ENCODE measurements at regions of chr11 and their contacts with region 1.

Region 1: GRCh38 chr11:34357701-34358257 is at the start of gene ABTB2:
- DNase-seq: peak; percentile 97 to 98
- ATAC-seq: peak; percentile 92 to 98 (median 94)
- H3K4me3 ChIP-seq: peak within 1 kb of the TSS; percentile 47
- H3K4me3 Mint-ChIP-seq: peak within 1 kb of the TSS; percentile 96
- H3K27ac ChIP-seq: no peak within 1 kb of the TSS
- H3K27ac Mint-ChIP-seq: peak within 1 kb of the TSS; percentile 61 to 66
- H3K4me1 ChIP-seq: peaks cover 28% of the 10 kb centered on the region
- H3K4me1 Mint-ChIP-seq: peaks cover 28 to 43% of the 10 kb centered on the region in 2 donors
- H3K27me3 ChIP-seq: peaks cover 22% of the 10 kb centered on the region
- H3K27me3 Mint-ChIP-seq: peaks cover 32 to 62% of the 10 kb centered on the region in 2 donors
- CTCF ChIP-seq: no peak
- total RNA-seq, gene ABTB2: 0.65 to 1.7 (median 1.1) TPM

Region 2: DNA sequence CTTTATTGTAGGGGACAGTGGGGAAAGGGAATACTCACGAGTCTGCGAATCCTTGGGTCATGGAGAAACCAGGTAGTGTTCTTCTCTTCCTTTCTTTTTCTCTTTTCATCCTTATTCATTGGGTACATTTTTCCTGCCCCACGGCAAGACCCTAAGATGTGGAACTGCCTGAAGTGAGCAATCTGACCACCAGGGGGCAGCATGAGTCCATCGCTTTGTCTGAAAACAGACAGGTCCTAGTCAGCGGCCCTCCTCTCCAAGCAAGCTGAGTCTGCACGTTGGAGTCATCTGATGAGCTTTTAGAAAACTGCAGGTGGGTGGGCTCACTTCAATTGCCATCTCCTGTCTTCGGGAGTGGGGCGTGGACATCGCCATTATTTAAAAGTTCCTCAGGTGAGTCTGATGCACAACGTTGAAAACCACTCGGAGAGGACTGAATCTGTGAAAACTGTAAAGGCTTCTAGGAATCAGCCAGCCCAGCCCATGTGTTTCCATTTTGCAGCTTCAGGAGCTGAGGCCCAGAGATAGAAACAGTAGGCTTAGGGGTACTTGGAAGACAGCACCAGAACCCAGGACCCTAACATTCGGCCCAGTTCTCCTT is 549.5 kb before region 1 on chr11:
- intact Hi-C with region 1: loop called (anchors 1 kb)
- DNase-seq: peak; percentile 79 to 89
- ATAC-seq: peak; percentile 88 to 97 (median 91)
- H3K4me3 ChIP-seq: no peak overlapping the region
- H3K4me3 Mint-ChIP-seq: no peak overlapping the region
- H3K27ac ChIP-seq: no peak overlapping the region
- H3K27ac Mint-ChIP-seq: no peak overlapping the region
- H3K4me1 ChIP-seq: no peaks in the 10 kb centered on the region
- H3K4me1 Mint-ChIP-seq: peaks cover 5% of the 10 kb centered on the region in 2 donors
- H3K27me3 ChIP-seq: peaks cover 16% of the 10 kb centered on the region
- H3K27me3 Mint-ChIP-seq: peaks cover 22 to 39% of the 10 kb centered on the region in 2 donors
- CTCF ChIP-seq: peak; percentile 89

Region 3: GRCh38 chr11:33996498-33997454 is 361.0 kb before region 1 on chr11:
- intact Hi-C with region 1: loop called (anchors 1 kb)
- DNase-seq: peak; percentile 48 to 86
- ATAC-seq: peak; percentile 93 to 100 (median 100)
- H3K4me3 ChIP-seq: no peak overlapping the region
- H3K4me3 Mint-ChIP-seq: no peak overlapping the region
- H3K27ac ChIP-seq: no peak overlapping the region
- H3K27ac Mint-ChIP-seq: no peak overlapping the region
- H3K4me1 ChIP-seq: peaks cover 5% of the 10 kb centered on the region
- H3K4me1 Mint-ChIP-seq: peaks cover 7 to 10% of the 10 kb centered on the region in 2 donors
- H3K27me3 ChIP-seq: peaks cover 11% of the 10 kb centered on the region
- H3K27me3 Mint-ChIP-seq: peaks cover 19 to 22% of the 10 kb centered on the region in 2 donors
- CTCF ChIP-seq: peak; percentile 74

Region 4: GRCh38 chr11:34105079-34105956 is 252.5 kb before region 1 on chr11 and contains the start of gene NAT10:
- intact Hi-C with region 1: loop called (anchors 1 kb)
- DNase-seq: peak; percentile 96 to 100
- ATAC-seq: peak; percentile 93 to 98 (median 94)
- H3K4me3 ChIP-seq: peak within 1 kb of the TSS; percentile 82
- H3K4me3 Mint-ChIP-seq: peak within 1 kb of the TSS; percentile 96
- H3K27ac ChIP-seq: peak within 1 kb of the TSS; percentile 94
- H3K27ac Mint-ChIP-seq: peak within 1 kb of the TSS; percentile 96 to 97
- H3K4me1 ChIP-seq: peaks cover 16% of the 10 kb centered on the region
- H3K4me1 Mint-ChIP-seq: peaks cover 34 to 40% of the 10 kb centered on the region in 2 donors
- H3K27me3 ChIP-seq: no peaks in the 10 kb centered on the region
- H3K27me3 Mint-ChIP-seq: no peaks in the 10 kb centered on the region
- CTCF ChIP-seq: no peak
- total RNA-seq, gene NAT10: 40.3 to 53.6 (median 42.8) TPM

Region 5: DNA sequence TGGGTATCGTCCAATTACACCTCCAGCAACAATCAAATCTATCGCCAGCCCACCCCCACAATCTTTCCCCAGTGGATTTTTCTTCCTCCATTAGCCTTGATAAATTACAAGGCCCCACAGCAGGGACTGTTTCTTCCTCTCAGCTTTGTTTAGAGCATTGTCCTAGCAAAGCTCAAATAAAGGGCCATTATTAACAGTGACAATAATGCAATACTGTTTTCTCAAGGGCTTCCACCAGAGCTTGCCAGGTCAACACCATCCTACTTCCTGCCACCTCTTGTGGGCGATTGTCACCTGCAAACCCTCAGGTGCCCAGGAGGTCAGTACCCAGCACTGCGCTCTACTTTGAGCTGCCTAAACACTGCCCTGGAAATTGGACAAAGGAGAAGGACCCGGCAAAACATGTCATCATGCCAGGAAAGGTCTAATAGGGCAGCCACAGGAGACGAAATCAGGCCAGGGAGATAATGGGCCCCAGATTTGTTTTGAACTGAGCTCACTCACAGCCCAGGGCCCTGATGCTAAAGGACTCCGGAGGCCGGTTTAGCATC is 95.2 kb before region 1 on chr11:
- intact Hi-C with region 1: no loop called
- DNase-seq: no peak
- ATAC-seq: no peak
- H3K4me3 ChIP-seq: no peak overlapping the region
- H3K4me3 Mint-ChIP-seq: no peak overlapping the region
- H3K27ac ChIP-seq: no peak overlapping the region
- H3K27ac Mint-ChIP-seq: no peak overlapping the region
- H3K4me1 ChIP-seq: no peaks in the 10 kb centered on the region
- H3K4me1 Mint-ChIP-seq: peaks cover 0 to 6% of the 10 kb centered on the region in 2 donors
- H3K27me3 ChIP-seq: no peaks in the 10 kb centered on the region
- H3K27me3 Mint-ChIP-seq: no peaks in the 10 kb centered on the region
- CTCF ChIP-seq: no peak

Region 6: GRCh38 chr11:34438529-34439507 is 81.0 kb after region 1 on chr11 and contains the start of gene CAT:
- intact Hi-C with region 1: loop called (anchors 2 kb)
- DNase-seq: peak; percentile 97
- ATAC-seq: peak; percentile 94 to 98 (median 95)
- H3K4me3 ChIP-seq: peak within 1 kb of the TSS; percentile 67
- H3K4me3 Mint-ChIP-seq: peak within 1 kb of the TSS; percentile 95
- H3K27ac ChIP-seq: peak within 1 kb of the TSS; percentile 69
- H3K27ac Mint-ChIP-seq: peak within 1 kb of the TSS; percentile 91 to 98
- H3K4me1 ChIP-seq: peaks cover 11% of the 10 kb centered on the region
- H3K4me1 Mint-ChIP-seq: peaks cover 30 to 36% of the 10 kb centered on the region in 2 donors
- H3K27me3 ChIP-seq: no peaks in the 10 kb centered on the region
- H3K27me3 Mint-ChIP-seq: no peaks in the 10 kb centered on the region
- CTCF ChIP-seq: no peak
- total RNA-seq, gene CAT: 31.0 to 43.9 (median 36.3) TPM